Ascending aorta (tissue), 2 donors: ENCODE measurements at regions of chrX and their contacts with region 1.

Region 1: DNA sequence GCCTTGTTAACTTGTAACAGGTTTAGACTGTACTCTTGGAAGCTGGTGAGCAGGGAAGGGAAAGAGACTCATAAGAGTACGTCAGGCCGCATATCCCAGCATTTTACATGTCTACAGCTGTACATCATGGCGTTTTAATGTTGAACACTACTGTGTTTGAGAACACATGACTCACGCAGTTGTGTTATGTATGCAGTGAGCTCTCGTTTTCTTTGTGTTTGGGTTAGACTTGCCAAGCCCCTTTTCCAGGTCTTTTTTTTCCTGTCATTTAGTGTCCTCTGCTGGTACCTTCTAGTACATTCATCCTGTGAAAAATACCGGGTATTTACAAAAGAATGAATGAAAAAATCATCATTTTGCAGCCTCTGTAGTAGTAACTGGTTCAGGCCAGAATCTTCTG is 35.3 kb downstream of the SMS start:
- DNase-seq: no peak
- H3K4me3 ChIP-seq: no peak overlapping the region
- H3K27ac ChIP-seq: peak overlapping the region in 1 of 2 donors; percentile 39
- H3K4me1 ChIP-seq: no peaks in the 10 kb centered on the region
- H3K27me3 ChIP-seq: no peaks in the 10 kb centered on the region
- CTCF ChIP-seq: peak; percentile 16 to 46 (median 21)

Region 2: DNA sequence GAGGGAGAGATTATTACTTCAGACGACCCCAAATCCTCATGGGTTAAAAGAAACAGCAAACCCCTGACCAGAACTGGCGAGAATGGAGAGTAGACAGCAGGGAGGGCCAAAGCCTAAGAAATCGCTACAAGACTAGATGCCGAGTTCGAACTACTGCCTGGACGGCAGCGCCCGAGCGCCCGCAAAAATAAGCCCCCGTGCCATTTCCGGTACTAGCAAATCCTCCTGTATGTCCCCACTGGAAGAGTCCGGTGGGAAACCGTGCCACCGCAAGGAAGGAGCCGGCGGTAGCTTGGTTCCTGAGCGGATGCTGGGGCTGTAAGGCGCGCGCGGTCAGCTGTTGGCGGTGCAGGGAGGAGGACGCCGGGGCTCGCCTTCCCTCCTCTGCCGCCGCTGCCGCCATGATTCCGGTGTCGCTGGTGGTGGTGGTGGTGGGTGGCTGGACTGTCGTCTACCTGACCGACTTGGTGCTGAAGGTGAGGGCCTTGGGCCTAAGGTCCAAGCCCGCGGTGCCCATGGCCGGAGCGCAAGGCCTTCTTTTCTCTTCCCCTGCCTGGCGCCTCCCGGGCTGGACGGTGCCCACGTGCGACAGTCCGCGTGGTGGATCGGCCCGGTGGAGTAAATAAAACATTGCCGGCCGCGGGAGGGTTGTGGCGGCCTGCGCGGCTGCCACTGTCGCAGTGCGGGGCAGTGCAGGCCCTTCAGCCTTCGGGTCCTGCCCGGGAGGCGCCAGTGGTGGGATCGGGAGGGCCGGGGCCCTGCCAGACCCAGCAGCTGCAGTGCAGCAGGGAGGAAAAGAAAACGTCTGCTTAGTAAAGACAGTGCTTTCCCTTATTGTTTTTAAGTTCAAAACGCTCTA is 136.2 kb before region 1 on chrX and contains the start of gene MBTPS2:
- intact Hi-C with region 1: loop called (anchors 1 kb)
- DNase-seq: peak; percentile 27 to 89
- H3K4me3 ChIP-seq: peak within 1 kb of the TSS; percentile 63 to 79
- H3K27ac ChIP-seq: peak within 1 kb of the TSS; percentile 76 to 82
- H3K4me1 ChIP-seq: no peaks in the 10 kb centered on the region
- H3K27me3 ChIP-seq: no peaks in the 10 kb centered on the region
- CTCF ChIP-seq: peak in 1 of 3 experiments; percentile 27
- total RNA-seq, gene MBTPS2: 6.2 TPM

Region 3: DNA sequence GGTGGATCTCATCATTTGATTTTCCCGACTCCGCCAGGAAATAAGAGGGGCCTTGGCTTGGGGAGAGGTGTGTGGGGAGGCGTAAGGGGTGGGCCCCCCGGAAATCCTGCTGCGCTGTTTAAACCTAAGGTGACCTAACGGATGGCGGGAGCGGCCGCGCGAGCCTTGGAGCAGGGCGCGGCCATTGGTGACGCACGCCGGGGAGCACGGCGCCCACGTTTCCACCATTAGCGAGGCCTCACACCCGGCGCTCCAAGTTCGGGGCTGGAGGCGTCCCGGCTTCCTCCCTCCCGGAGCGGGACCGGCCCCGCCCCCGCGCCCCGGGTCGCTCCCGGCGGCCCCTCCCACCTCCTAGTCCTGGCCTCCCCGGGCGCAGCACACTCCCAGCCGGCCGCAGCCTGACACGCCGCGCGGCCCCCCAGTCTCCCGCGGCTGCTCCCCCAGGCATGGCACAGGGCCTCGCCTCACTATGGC is 35.4 kb before region 1 on chrX and contains the start of gene SMS:
- intact Hi-C with region 1: loop called (anchors 5 kb)
- DNase-seq: peak; percentile 29 to 88
- H3K4me3 ChIP-seq: peak within 1 kb of the TSS; percentile 68 to 82
- H3K27ac ChIP-seq: peak within 1 kb of the TSS; percentile 76 to 82
- H3K4me1 ChIP-seq: peaks cover 0 to 5% of the 10 kb centered on the region in 2 donors
- H3K27me3 ChIP-seq: no peaks in the 10 kb centered on the region
- CTCF ChIP-seq: no peak
- total RNA-seq, gene SMS: 35.1 TPM